ENCODE measurements at regions of chr17 and their contacts with region 1.

Region 1: DNA sequence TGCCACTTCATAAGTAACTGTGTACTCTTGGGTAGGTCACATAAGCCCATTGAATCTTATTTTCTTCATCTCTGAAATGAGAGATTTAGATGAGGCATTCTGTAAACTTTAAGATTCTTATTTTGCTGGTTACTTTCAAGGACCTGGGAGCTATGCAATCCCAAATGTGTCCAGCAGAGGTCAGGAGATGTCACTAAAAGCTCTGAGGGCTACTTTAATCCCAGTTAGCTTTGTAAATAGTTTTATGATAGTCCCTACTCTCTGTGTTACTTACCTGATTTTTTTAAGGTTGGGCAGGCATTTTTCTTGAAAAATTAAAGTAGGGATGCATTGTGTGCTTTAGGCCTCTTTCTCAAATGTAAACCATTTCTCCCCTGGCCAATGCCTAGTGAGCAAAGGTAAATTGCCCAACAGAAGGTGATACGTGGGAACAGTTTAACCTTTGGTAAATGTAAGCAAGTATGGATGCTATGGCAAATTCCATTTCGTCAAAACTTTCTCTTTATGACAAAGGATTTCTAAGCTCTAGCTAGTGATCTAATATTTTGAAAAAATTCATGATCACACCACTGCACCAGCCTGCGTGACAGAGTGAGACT is 57.1 kb upstream of the WSB1 start:
- DNase-seq: peak; percentile 70
- H3K4me3 ChIP-seq: no peak overlapping the region
- H3K27ac ChIP-seq: no peak overlapping the region
- H3K4me1 ChIP-seq: no peaks in the 10 kb centered on the region
- H3K27me3 ChIP-seq: no peaks in the 10 kb centered on the region
- CTCF ChIP-seq: peak; percentile 94
- EP300 ChIP-seq: no peak
- RAD21 ChIP-seq: peak; percentile 92

Region 2: GRCh38 chr17:27217631-27218030 is 19.2 kb before region 1 on chr17:
- CTCF ChIA-PET with region 1: interaction called, 10 read pairs
- POLR2A ChIA-PET with region 1: no interaction called
- DNase-seq: no peak
- H3K4me3 ChIP-seq: no peak overlapping the region
- H3K27ac ChIP-seq: no peak overlapping the region
- H3K4me1 ChIP-seq: no peaks in the 10 kb centered on the region
- H3K27me3 ChIP-seq: no peaks in the 10 kb centered on the region; the same call in 1 of the 2 replicates
- CTCF ChIP-seq: no peak
- EP300 ChIP-seq: no peak
- RAD21 ChIP-seq: no peak

Region 3: GRCh38 chr17:27268394-27269084 is 31.7 kb after region 1 on chr17:
- CTCF ChIA-PET with region 1: interaction called, 11 read pairs
- POLR2A ChIA-PET with region 1: no interaction called
- DNase-seq: no peak
- H3K4me3 ChIP-seq: no peak overlapping the region
- H3K27ac ChIP-seq: no peak overlapping the region
- H3K4me1 ChIP-seq: no peaks in the 10 kb centered on the region
- H3K27me3 ChIP-seq: peaks cover 12% of the 10 kb centered on the region; the same call in 1 of the 2 replicates
- CTCF ChIP-seq: no peak
- EP300 ChIP-seq: no peak
- RAD21 ChIP-seq: no peak

Region 4: DNA sequence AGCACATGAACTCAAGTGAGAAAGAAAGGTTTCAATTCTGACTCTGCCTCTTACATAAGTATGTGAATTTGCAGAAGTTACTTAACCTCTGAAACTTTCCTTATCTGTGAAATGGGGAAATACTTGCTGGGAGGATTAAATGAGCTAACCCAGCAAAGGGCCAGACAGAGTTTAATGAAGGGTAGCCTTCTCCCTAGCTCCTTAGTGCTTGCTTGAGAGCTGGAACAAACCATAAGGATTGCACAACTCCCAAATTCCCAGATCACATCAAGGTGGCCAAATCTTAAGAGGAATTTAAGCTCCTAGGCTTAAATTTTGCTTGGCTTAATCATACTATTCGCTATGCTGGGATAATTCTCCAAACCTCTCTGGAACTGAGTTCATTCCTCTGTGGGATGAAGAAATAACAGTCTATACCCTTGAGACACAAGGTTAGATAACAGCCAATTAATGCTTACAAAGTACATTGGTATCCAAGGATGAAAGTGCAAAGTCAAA is 45.3 kb after region 1 on chr17:
- CTCF ChIA-PET with region 1: no interaction called
- POLR2A ChIA-PET with region 1: no interaction called
- DNase-seq: no peak
- H3K4me3 ChIP-seq: no peak overlapping the region
- H3K27ac ChIP-seq: no peak overlapping the region
- H3K4me1 ChIP-seq: no peaks in the 10 kb centered on the region
- H3K27me3 ChIP-seq: no peaks in the 10 kb centered on the region
- CTCF ChIP-seq: no peak
- EP300 ChIP-seq: no peak
- RAD21 ChIP-seq: no peak

Region 5: DNA sequence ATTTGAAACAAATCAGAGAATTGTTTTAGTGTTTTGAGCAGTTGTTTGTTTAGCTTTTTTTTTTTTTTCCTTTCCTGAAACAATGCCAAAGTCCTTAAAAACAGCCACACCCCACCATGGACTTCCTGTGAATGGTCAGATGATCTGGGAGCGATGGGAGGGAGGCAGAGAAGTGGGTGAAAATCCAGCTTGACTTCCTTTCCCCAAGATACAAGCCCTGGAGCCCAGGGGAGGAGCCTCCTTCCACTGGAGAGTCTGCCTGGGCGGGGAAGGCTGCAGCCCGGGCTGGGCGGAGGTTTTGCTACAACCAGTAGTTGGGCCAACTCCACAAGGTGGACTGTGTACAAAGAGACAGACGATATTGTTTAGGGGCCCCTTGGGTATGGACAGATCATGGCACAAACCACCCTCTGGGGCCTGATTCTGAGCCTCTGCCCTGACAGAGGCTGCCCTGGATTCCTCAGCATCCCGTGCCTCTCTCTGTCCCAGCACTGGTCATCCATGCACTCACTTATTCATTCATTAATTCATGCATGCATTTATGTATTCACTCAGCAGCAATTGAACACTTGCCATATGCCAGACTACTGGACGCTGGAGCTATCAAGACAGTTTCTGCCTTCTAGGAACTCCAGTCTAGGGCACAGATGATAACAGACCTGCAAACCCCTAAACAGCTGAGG is 86.8 kb after region 1 on chr17:
- CTCF ChIA-PET with region 1: interaction called, 13 read pairs
- POLR2A ChIA-PET with region 1: no interaction called
- DNase-seq: no peak
- H3K4me3 ChIP-seq: no peak overlapping the region
- H3K27ac ChIP-seq: no peak overlapping the region
- H3K4me1 ChIP-seq: peaks cover 0 to 22% of the 10 kb centered on the region in 2 experiments; a peak in 1 of 4 replicates
- H3K27me3 ChIP-seq: no peaks in the 10 kb centered on the region
- CTCF ChIP-seq: no peak
- EP300 ChIP-seq: no peak
- RAD21 ChIP-seq: no peak

Region 6: DNA sequence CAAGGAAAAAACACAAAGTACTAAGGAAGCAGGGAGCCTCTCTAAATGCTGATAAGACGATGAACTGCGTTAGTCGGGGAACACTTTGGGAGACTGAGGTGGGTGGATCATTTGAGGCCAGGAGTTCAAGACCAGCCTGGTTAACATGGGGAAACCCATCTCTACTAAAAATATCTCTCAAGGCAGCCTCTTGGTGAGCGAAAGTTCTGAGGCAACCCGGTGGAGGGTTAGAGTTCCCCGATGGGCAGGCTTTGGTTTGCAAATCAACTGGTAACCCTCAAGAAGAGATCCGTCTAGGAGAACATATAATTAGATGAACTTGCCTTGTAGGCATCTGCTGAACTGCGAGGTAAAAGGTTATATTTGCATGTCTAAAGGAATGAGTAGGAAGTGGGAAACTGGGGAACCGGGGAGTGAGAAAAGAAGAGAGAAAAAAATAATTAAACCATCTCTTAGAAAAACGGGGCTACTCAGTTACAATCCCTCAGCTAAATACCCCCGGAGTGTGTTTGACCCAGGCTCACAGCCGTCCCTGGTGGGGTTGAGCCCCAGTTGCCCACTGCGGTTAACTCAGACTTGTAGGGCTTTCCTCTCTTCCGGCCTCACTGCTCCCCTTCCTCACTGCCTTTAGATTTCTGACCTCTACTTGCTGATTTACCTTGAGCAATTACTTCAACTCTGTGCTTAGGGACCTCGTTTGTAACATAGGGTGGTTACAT is 101.9 kb after region 1 on chr17:
- CTCF ChIA-PET with region 1: interaction called, 125 read pairs
- POLR2A ChIA-PET with region 1: no interaction called
- DNase-seq: no peak
- H3K4me3 ChIP-seq: no peak overlapping the region
- H3K27ac ChIP-seq: no peak overlapping the region
- H3K4me1 ChIP-seq: peaks cover 0 to under 1% of the 10 kb centered on the region in 2 experiments; a peak in 1 of 4 replicates
- H3K27me3 ChIP-seq: no peaks in the 10 kb centered on the region
- CTCF ChIP-seq: no peak
- EP300 ChIP-seq: no peak
- RAD21 ChIP-seq: no peak

Region 7: GRCh38 chr17:27381007-27381501 is 144.2 kb after region 1 on chr17:
- CTCF ChIA-PET with region 1: interaction called, 44 read pairs
- POLR2A ChIA-PET with region 1: no interaction called
- DNase-seq: peak; percentile 89
- H3K4me3 ChIP-seq: peak overlapping the region; percentile 18 to 31; a peak in 1 of 4 replicates
- H3K27ac ChIP-seq: no peak overlapping the region
- H3K4me1 ChIP-seq: peaks cover 23 to 30% of the 10 kb centered on the region in 2 experiments; a peak in 3 of 4 replicates
- H3K27me3 ChIP-seq: no peaks in the 10 kb centered on the region
- CTCF ChIP-seq: peak; percentile 85
- EP300 ChIP-seq: no peak
- RAD21 ChIP-seq: peak; percentile 57

Region 8: GRCh38 chr17:27455914-27456680 is 219.3 kb after region 1 on chr17 and contains the start of gene KSR1:
- CTCF ChIA-PET with region 1: interaction called, 16 read pairs
- POLR2A ChIA-PET with region 1: no interaction called
- DNase-seq: peak; percentile 93
- H3K4me3 ChIP-seq: peak within 1 kb of the TSS; percentile 73 to 80
- H3K27ac ChIP-seq: peak within 1 kb of the TSS in 1 of 2 experiments; percentile 63; a peak in 1 of 4 replicates
- H3K4me1 ChIP-seq: peaks cover 8 to 41% of the 10 kb centered on the region in 2 experiments
- H3K27me3 ChIP-seq: no peaks in the 10 kb centered on the region
- CTCF ChIP-seq: peak; percentile 58
- EP300 ChIP-seq: no peak
- RAD21 ChIP-seq: peak; percentile 71
- polyA plus RNA-seq, gene KSR1: 7.5 and 7.9 TPM in 2 replicates

Measured in SK-N-SH (cell line).